Naive thymus-derived CD4-positive, alpha-beta T cell (primary cell): ENCODE measurements at regions of chr9 and their contacts with region 1.

Region 1: DNA sequence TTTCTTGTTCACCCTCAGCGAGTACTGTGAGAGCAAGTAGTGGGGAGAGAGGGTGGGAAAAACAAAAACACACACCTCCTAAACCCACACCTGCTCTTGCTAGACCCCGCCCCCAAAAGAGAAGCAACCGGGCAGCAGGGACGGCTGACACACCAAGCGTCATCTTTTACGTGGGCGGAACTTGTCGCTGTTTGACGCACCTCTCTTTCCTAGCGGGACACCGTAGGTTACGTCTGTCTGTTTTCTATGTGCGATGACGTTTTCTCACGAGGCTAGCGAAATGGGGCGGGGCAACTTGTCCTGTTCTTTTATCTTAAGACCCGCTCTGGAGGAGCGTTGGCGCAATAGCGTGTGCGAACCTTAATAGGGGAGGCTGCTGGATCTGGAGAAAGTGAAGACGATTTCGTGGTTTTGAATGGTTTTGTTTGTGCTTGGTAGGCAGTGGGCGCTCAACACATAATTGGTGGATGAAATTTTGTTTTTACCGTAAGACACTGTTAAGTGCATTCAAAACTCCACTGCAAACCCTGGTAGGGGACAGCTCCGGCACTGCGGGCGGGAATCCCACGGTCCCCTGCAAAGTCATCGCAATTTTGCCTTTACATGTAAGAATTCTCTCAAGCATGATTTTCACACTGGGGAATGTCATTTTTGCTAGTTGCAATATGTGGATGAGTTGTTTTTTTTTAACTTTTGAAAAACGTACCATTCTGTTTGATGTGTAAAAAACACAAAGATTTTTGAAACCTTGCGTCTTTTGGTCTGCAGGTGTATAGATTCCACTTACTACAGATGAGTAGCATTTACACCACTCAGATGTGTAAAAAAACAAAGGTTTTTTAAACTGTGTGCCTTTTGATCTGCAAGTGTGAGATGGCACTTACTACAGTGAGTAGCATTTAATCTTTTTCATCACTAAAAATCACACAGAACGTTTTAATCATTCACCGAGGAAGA is 631 bp upstream of the C9orf72 start:
- DNase-seq: peak; percentile 74 to 99 (median 98)
- ATAC-seq: peak; percentile 87
- H3K4me3 ChIP-seq: peak overlapping the region; percentile 79
- H3K4me3 Mint-ChIP-seq: peak overlapping the region; percentile 91 to 98 (median 97)
- H3K27ac ChIP-seq: peak overlapping the region; percentile 99
- H3K27ac Mint-ChIP-seq: peak overlapping the region; percentile 96 to 100 (median 99)
- H3K4me1 ChIP-seq: peaks cover 6 to 10% of the 10 kb centered on the region in 2 donors
- H3K4me1 Mint-ChIP-seq: peaks cover 16 to 46% (median 32%) of the 10 kb centered on the region in 7 donors
- H3K27me3 ChIP-seq: no peaks in the 10 kb centered on the region
- H3K27me3 Mint-ChIP-seq: peaks cover 0 to 4% (median 0%) of the 10 kb centered on the region in 5 donors

Region 2: GRCh38 chr9:26892251-26893029 is 681.5 kb before region 1 on chr9 and contains the start of gene CAAP1:
- CTCF ChIA-PET with region 1: no interaction called
- POLR2A ChIA-PET with region 1: interaction called, 3 read pairs
- intact Hi-C with region 1: loop called (anchors 1 kb)
- DNase-seq: peak; percentile 78 to 93 (median 88)
- ATAC-seq: peak; percentile 96
- H3K4me3 ChIP-seq: peak within 1 kb of the TSS; percentile 100
- H3K4me3 Mint-ChIP-seq: peak within 1 kb of the TSS; percentile 95 to 100 (median 99)
- H3K27ac ChIP-seq: peak within 1 kb of the TSS; percentile 88
- H3K27ac Mint-ChIP-seq: peak within 1 kb of the TSS; percentile 98 to 100 (median 99)
- H3K4me1 ChIP-seq: peaks cover 11 to 15% of the 10 kb centered on the region in 2 donors
- H3K4me1 Mint-ChIP-seq: peaks cover 26 to 53% (median 36%) of the 10 kb centered on the region in 7 donors
- H3K27me3 ChIP-seq: no peaks in the 10 kb centered on the region
- H3K27me3 Mint-ChIP-seq: no peaks in the 10 kb centered on the region
- total RNA-seq, gene CAAP1: 11.8 to 19.6 (median 17.8) TPM

Region 3: DNA sequence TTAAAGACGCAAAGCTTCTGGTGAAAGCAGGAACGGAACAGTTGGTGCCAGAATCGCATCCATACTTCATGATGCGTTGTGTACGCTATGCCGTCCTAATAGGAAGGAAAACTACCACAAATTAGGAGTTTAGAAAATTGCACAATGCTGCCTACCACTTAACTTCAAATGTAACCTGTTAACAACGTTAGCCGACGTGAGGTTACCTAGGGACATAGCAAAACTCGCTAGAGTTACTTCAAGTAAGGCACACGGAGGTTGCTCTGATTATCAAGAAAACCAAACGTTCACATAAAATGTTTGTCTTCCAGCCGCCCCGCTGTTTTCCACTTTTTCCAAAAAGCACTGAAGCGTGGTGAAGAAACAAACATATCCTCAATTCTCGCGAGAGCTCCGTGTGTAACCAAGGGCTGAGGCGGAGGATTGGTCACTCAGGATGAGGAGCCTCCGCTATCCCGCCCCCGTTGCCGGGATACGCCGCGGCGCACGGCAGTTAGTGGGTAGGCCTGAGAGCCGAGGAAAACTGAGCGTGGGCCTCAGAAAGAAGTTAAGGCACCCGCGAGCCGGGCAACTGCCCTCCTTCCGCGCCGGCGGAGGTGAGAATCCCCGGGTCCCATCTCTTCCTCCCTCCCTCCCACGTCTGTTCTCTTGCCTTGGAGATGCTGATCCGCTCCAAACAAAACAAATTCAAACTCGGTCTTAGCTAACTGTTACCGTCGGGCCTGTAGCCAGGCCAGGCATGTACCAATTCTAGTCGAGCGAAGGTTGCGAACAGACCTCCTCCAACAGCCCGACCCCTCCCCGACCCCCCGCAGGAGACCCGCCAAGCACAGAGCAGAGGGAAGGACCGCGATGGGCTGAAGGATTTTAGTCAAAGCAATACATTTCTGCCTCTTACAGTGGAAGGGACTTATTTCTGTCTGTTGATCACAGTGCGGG is 617.7 kb before region 1 on chr9 and contains the start of gene IFT74:
- CTCF ChIA-PET with region 1: no interaction called
- POLR2A ChIA-PET with region 1: interaction called, 3 read pairs
- intact Hi-C with region 1: loop called (anchors 1 kb)
- DNase-seq: peak; percentile 84 to 97 (median 93)
- ATAC-seq: peak; percentile 100
- H3K4me3 ChIP-seq: peak within 1 kb of the TSS; percentile 76
- H3K4me3 Mint-ChIP-seq: peak within 1 kb of the TSS; percentile 80 to 99 (median 95)
- H3K27ac ChIP-seq: peak within 1 kb of the TSS; percentile 82
- H3K27ac Mint-ChIP-seq: peak within 1 kb of the TSS; percentile 91 to 98 (median 96)
- H3K4me1 ChIP-seq: peaks cover 0 to 3% of the 10 kb centered on the region in 2 donors
- H3K4me1 Mint-ChIP-seq: peaks cover 13 to 47% (median 38%) of the 10 kb centered on the region in 7 donors
- H3K27me3 ChIP-seq: no peaks in the 10 kb centered on the region
- H3K27me3 Mint-ChIP-seq: no peaks in the 10 kb centered on the region
- total RNA-seq, gene IFT74: 8.0 to 11.6 (median 9.7) TPM

Region 4: GRCh38 chr9:27365707-27366376 is 208.1 kb before region 1 on chr9:
- CTCF ChIA-PET with region 1: no interaction called
- POLR2A ChIA-PET with region 1: no interaction called
- intact Hi-C with region 1: loop called in 1 of 2 experiments (anchors 1 kb)
- DNase-seq: peak in 7 of 9 donors; percentile 2 to 55 (median 11)
- ATAC-seq: peak; percentile 49
- H3K4me3 ChIP-seq: no peak overlapping the region
- H3K4me3 Mint-ChIP-seq: peak overlapping the region in 4 of 10 donors; percentile 28 to 81 (median 32)
- H3K27ac ChIP-seq: no peak overlapping the region
- H3K27ac Mint-ChIP-seq: peak overlapping the region in 2 of 9 donors; percentile 7 to 85
- H3K4me1 ChIP-seq: peaks cover 0 to 18% of the 10 kb centered on the region in 2 donors
- H3K4me1 Mint-ChIP-seq: peaks cover 20 to 50% (median 26%) of the 10 kb centered on the region in 7 donors
- H3K27me3 ChIP-seq: peaks cover 0 to 3% of the 10 kb centered on the region in 2 donors
- H3K27me3 Mint-ChIP-seq: peaks cover 0 to 8% (median 7%) of the 10 kb centered on the region in 5 donors

Region 5: DNA sequence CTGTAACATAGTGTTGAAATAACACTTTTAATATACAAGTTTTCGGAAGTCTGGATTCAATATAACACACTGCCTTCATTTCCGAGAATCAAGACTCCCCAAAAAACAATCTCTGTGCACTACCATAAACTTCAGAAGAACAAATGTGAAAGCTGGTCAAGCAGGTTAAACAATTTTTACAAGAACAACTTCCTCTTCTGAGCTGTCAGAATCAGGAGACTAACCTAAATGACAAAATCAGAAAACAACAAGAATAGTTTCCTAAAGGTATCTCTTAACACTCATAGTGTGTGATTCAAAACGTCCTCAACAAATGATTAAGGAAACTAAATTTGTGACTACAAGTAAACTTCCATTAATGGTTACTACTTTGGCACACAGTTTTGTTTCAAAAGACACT is 12.2 kb before region 1 on chr9:
- CTCF ChIA-PET with region 1: interaction called, 3 read pairs
- POLR2A ChIA-PET with region 1: interaction called, 14 read pairs
- intact Hi-C with region 1: loop called in 1 of 2 experiments (anchors 1 kb)
- DNase-seq: no peak
- ATAC-seq: no peak
- H3K4me3 ChIP-seq: no peak overlapping the region
- H3K4me3 Mint-ChIP-seq: no peak overlapping the region
- H3K27ac ChIP-seq: no peak overlapping the region
- H3K27ac Mint-ChIP-seq: no peak overlapping the region
- H3K4me1 ChIP-seq: peaks cover 0 to 4% of the 10 kb centered on the region in 2 donors
- H3K4me1 Mint-ChIP-seq: peaks cover 1 to 30% (median 24%) of the 10 kb centered on the region in 7 donors
- H3K27me3 ChIP-seq: no peaks in the 10 kb centered on the region
- H3K27me3 Mint-ChIP-seq: no peaks in the 10 kb centered on the region